ENCODE measurements at regions of chr9 and their contacts with region 1.

Region 1: DNA sequence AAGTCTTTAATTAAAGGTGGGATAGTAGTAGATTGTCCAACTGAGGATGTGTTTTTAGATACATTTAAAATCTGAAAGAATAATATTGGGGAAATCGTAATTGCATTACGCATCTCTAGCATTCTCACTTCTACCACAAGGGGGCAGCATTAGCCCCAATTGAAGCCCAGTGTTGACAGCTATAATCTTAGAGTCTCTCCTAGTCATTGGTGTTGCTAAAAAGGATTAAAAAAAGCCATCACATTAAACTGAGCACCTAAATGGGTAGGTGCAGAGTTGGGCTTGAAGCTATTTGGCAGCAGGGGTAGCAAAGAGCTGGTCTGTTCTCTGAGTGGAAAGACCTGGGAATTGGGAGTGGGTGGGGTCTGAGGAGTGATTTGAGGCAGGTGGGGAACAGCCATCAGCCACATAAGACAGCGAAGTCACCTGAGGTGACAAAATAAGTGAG is 177.2 kb downstream of the OSTF1 start:
- DNase-seq: peak in 1 of 2 experiments; percentile 41
- H3K4me3 ChIP-seq: no peak overlapping the region
- H3K27ac ChIP-seq: no peak overlapping the region
- H3K4me1 ChIP-seq: no peaks in the 10 kb centered on the region
- H3K27me3 ChIP-seq: no peaks in the 10 kb centered on the region
- CTCF ChIP-seq: peak; percentile 95

Region 2: GRCh38 chr9:75200892-75201470 is 64.6 kb before region 1 on chr9:
- CTCF ChIA-PET with region 1: no interaction called
- POLR2A ChIA-PET with region 1: no interaction called
- intact Hi-C with region 1: loop called (anchors 1 kb)
- DNase-seq: peak; percentile 9 to 46
- H3K4me3 ChIP-seq: no peak overlapping the region
- H3K27ac ChIP-seq: no peak overlapping the region
- H3K4me1 ChIP-seq: no peaks in the 10 kb centered on the region
- H3K27me3 ChIP-seq: no peaks in the 10 kb centered on the region
- CTCF ChIP-seq: peak; percentile 84

Region 3: DNA sequence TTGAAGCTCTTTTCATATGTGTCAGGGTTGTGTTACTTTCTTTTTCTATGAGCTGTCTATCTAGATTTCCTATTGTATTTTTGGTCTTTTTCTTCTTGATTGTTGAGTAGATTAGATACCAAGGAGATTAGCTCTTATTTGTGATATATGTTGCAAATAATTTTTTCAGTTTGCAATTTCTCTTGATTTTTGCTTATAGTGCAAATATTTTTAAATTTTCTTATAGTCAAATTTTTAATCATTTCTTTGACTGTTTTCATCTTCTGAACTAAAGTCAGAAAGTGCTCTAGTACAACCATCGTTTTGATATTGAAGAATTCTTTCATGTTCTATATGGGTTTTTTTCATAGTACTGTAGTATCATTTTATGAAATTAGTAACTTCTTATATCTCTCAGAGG is 16.5 kb after region 1 on chr9:
- CTCF ChIA-PET with region 1: no interaction called
- POLR2A ChIA-PET with region 1: no interaction called
- intact Hi-C with region 1: no loop called
- DNase-seq: no peak
- H3K4me3 ChIP-seq: no peak overlapping the region
- H3K27ac ChIP-seq: no peak overlapping the region
- H3K4me1 ChIP-seq: no peaks in the 10 kb centered on the region
- H3K27me3 ChIP-seq: no peaks in the 10 kb centered on the region
- CTCF ChIP-seq: no peak

Region 4: GRCh38 chr9:75429531-75430475 is 164.3 kb after region 1 on chr9:
- CTCF ChIA-PET with region 1: no interaction called
- POLR2A ChIA-PET with region 1: interaction called, 35 read pairs
- intact Hi-C with region 1: no loop called
- DNase-seq: no peak
- H3K4me3 ChIP-seq: no peak overlapping the region
- H3K27ac ChIP-seq: no peak overlapping the region
- H3K4me1 ChIP-seq: no peaks in the 10 kb centered on the region
- H3K27me3 ChIP-seq: peaks cover 5% of the 10 kb centered on the region; the same call in 1 of the 2 replicates
- CTCF ChIP-seq: no peak

Region 5: GRCh38 chr9:75866273-75866871 is 600.8 kb after region 1 on chr9:
- CTCF ChIA-PET with region 1: no interaction called
- POLR2A ChIA-PET with region 1: no interaction called
- intact Hi-C with region 1: loop called (anchors 5 kb)
- DNase-seq: peak in 1 of 2 experiments; percentile 19
- H3K4me3 ChIP-seq: no peak overlapping the region
- H3K27ac ChIP-seq: no peak overlapping the region
- H3K4me1 ChIP-seq: no peaks in the 10 kb centered on the region
- H3K27me3 ChIP-seq: no peaks in the 10 kb centered on the region
- CTCF ChIP-seq: peak; percentile 89

Region 6: GRCh38 chr9:76704593-76705204 is 1439.2 kb after region 1 on chr9:
- CTCF ChIA-PET with region 1: no interaction called
- POLR2A ChIA-PET with region 1: no interaction called
- intact Hi-C with region 1: loop called (anchors 10 kb)
- DNase-seq: peak; percentile 25 to 64
- H3K4me3 ChIP-seq: no peak overlapping the region
- H3K27ac ChIP-seq: no peak overlapping the region
- H3K4me1 ChIP-seq: no peaks in the 10 kb centered on the region
- H3K27me3 ChIP-seq: peaks cover 50% of the 10 kb centered on the region
- CTCF ChIP-seq: peak; percentile 85